Dorsolateral prefrontal cortex (tissue), 120 donors: ENCODE measurements at regions of chr20 and their contacts with region 1.

Region 1: DNA sequence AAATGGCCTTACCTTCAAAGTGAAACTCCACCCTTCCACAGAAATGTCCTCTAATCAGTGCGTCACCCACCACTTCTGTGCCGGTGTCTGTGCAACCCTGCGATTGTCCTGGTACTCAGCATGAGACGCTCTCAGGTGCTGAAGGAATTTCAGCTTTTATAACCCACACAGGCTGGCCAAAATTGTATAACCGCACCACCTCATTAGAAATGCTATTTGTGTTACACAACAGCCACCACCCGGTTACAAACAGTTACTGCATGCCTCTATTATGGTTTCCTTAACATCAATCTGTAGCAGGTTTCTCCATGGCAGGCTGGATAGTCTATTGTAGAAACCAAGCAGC is 51.5 kb downstream of the SLC23A2 start:
- DNase-seq: peak in 3 of 10 donors; percentile 35 to 52 (median 48)
- H3K4me3 ChIP-seq: peak overlapping the region in 54 of 59 donors; percentile 2 to 56 (median 35)
- H3K27ac ChIP-seq: peak overlapping the region in 57 of 59 donors; percentile 42 to 92 (median 82)
- H3K27me3 ChIP-seq: no peaks in the 10 kb centered on the region
- CTCF ChIP-seq: peak; percentile 39 to 85 (median 71)

Region 2: GRCh38 chr20:4502756-4503155 is 447.1 kb before region 1 on chr20:
- intact Hi-C with region 1: no loop called
- DNase-seq: no peak
- H3K4me3 ChIP-seq: no peak overlapping the region
- H3K27ac ChIP-seq: no peak overlapping the region
- H3K27me3 ChIP-seq: peaks cover 0 to 6% (median 0%) of the 10 kb centered on the region in 45 donors
- CTCF ChIP-seq: no peak

Region 3: DNA sequence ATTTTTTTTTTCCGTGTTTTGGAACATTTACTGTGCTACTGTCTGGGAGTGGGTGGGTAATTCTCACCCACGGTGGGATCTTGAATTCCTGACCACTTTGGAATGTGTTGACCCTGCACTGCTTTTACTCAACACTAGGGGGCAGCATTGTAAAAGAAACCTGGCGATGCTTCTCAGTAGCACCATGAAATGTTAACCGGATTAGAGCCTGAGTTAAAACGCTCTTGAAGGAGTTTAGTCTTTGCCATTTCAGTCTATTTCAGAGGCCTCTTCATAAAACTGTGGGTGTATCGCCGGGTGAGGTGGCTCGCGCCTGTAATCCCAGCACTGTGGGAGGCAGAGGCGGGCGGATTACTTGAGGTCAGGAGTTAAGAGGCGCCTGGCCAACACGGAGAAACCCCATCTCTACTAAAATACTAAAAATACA is 342.5 kb before region 1 on chr20:
- intact Hi-C with region 1: loop called (anchors 5 kb)
- DNase-seq: peak in 7 of 10 donors; percentile 32 to 70 (median 60)
- H3K4me3 ChIP-seq: peak overlapping the region in 6 of 59 donors; percentile 10 to 30 (median 14)
- H3K27ac ChIP-seq: peak overlapping the region in 42 of 59 donors; percentile 16 to 78 (median 52)
- H3K27me3 ChIP-seq: peaks cover 0 to 3% (median 0%) of the 10 kb centered on the region in 45 donors
- CTCF ChIP-seq: peak; percentile 93 to 100 (median 97)

Region 4: DNA sequence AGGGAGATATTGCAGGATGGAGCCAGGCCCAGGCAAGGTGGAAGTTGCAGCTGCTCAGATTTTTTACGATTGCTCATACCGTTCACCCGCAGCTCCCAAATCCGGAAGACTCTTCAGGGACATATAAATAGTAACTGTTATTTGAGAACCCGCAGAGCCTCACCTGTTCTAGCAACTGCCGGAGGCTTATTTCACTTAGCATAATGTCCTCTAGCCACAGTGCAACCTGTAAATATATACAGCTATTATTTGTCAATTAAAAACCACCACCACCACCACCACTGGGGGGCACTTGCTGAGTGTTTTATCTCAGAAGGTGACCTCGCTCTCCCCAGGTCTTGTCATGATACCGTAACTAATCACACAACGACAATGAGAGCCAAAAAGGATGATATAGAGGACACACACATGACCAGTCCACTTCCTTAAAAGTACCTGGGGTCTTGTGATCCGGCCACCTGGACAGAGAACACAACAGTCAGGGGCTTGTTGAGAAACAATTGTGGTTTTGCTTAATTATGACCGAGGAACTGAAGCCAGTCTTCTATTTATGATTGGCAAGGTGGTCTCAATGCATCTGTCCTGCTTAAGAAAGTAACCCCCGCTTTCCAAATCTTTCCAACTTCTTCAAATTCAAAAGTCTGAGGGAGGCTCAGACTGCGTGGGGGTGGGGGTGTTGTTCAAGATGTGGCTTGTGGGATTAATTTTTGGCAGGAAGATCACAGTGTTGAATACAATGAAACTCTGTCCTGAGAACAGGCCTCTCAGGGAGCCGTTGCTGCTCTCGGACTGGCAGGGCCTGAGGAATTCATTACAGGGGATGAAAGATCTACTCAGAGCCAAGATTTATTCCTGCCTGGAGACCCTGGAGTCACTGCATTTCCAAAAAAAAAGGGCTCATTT is 335.8 kb before region 1 on chr20:
- intact Hi-C with region 1: loop called (anchors 5 kb)
- DNase-seq: peak; percentile 65 to 94 (median 77)
- H3K4me3 ChIP-seq: peak overlapping the region in 27 of 59 donors; percentile 2 to 54 (median 24)
- H3K27ac ChIP-seq: peak overlapping the region; percentile 51 to 96 (median 86)
- H3K27me3 ChIP-seq: no peaks in the 10 kb centered on the region
- CTCF ChIP-seq: peak; percentile 20 to 80 (median 62)

Region 5: DNA sequence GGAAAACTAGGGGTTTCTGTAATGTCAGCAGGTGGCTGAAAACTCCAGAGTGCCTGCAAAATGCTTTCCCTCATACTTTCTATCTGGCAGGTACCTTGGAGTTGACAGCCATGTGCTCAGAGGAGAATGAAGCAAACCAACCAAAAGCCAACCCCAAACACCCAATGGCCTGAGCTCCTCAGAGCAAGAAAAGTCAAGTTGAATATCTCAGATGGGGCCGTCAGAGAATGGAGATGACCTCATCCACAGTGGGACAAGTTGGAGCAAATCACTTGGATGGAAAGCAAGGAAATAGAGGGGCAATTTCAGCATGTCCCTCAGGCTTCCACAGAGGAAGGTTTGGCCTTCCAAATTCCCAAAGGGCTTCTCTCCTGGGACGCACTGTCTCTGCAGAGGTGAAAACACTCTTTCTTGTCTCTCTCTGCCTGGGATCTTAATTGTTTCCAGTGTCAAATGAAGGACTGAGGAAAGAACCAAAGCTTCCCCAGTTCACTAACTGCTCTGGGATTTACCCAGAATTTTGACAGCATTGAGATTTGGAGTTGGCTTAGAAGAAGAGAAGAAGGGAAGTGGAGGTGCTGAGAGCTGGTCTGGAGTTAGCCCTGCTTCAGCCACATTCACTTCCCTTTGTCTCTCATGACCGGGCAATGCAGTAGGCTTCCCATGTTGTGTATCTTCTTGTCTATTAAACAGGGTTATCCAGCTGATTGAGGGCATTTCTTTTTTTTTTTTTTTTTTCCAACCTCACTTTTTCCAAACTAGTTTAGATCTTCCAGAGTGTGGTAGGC is 185.9 kb before region 1 on chr20:
- intact Hi-C with region 1: loop called in 1 of 2 experiments (anchors 2 kb)
- DNase-seq: no peak
- H3K4me3 ChIP-seq: no peak overlapping the region
- H3K27ac ChIP-seq: no peak overlapping the region
- H3K27me3 ChIP-seq: no peaks in the 10 kb centered on the region
- CTCF ChIP-seq: no peak

Region 6: DNA sequence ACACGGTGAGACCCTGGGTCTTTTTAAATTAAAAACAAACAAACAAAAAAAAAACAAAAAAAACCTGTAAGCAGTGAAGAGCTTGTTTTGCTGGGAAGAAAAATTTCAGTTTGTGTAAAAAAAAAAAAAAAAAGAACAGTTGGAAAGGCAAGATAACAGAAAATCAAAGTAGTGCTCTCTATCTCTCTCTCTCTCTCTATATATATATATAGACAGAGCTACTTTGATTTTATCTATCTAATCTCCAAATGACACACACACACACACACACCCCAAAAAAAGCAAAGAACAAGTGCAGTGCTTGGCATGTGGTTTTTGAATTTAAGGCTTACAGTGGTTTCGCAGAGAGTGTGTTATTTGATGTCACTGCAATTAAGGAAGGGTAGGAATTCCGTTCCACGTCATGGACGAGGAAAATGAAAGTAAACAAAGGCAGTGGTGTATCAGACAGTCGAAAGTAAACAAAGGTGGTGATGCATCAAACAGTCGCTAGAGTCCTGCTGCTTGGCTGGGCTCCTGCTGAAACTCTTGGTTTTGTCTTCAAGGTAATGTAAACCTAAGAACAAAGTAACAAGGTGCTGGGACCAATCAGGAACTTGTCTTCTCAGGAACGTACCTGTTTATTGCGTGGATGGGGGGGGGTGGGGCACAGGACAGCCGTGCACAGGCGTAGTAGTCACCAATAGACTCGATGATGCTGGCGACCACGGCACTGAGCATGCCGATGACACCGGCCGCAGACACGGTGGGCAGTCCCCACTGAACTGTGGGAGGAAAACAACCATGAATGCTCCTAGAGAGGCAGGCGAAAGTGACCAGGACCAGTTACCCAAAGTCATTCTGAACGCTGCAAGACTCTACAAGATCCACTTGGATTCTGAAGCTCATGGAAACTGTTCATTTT is 80.3 kb before region 1 on chr20:
- intact Hi-C with region 1: loop called in 1 of 2 experiments (anchors 10 kb)
- DNase-seq: no peak
- H3K4me3 ChIP-seq: no peak overlapping the region
- H3K27ac ChIP-seq: peak overlapping the region in 2 of 59 donors; percentile 5 to 34
- H3K27me3 ChIP-seq: no peaks in the 10 kb centered on the region
- CTCF ChIP-seq: no peak